Ascending aorta (tissue), 2 donors: ENCODE measurements at regions of chr14 and their contacts with region 1.

Region 1: GRCh38 chr14:23141671-23142451 is 22.8 kb upstream of the CEBPE start:
- DNase-seq: peak; percentile 41 to 91
- H3K4me3 ChIP-seq: no peak overlapping the region
- H3K27ac ChIP-seq: peak overlapping the region; percentile 63 to 64
- H3K4me1 ChIP-seq: peaks cover 4 to 33% of the 10 kb centered on the region in 2 donors
- H3K27me3 ChIP-seq: no peaks in the 10 kb centered on the region
- CTCF ChIP-seq: no peak

Region 2: GRCh38 chr14:23114669-23115491 is 27.0 kb before region 1 on chr14:
- intact Hi-C with region 1: no loop called
- DNase-seq: peak; percentile 33 to 87
- H3K4me3 ChIP-seq: no peak overlapping the region
- H3K27ac ChIP-seq: no peak overlapping the region
- H3K4me1 ChIP-seq: peaks cover 0 to 3% of the 10 kb centered on the region in 2 donors
- H3K27me3 ChIP-seq: no peaks in the 10 kb centered on the region
- CTCF ChIP-seq: no peak

Region 3: DNA sequence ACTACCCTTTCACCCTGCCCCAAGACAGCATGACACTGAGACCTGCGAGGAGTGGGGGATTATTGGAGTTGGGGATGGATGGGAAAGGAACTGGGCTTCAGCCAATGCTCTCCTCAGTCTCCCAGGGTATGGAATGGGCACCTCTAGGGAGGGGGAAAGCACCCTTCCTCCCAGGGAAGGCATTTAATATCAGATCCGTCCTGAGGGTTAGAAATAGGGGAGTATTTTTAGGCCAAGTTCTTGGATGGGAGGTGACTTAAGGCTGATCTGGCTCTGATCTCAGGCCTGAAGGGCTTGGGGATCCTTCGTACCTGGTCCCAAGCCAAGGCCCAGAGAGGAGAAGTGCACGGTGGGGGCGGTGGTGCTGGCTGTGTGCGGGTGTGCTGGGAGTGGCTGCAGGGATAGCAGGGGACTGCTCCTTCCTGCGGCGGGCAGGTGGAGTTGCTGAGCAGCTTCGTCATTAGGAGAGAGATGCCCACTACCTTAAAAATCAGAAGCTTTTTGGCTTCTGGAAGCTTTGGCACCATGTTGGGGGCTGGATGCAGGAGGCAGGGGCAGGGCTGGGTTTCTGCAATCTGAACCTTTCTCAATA is 15.8 kb before region 1 on chr14:
- intact Hi-C with region 1: loop called (anchors 2 kb)
- DNase-seq: no peak
- H3K4me3 ChIP-seq: no peak overlapping the region
- H3K27ac ChIP-seq: peak overlapping the region; percentile 58 to 72
- H3K4me1 ChIP-seq: peaks cover 6 to 29% of the 10 kb centered on the region in 2 donors
- H3K27me3 ChIP-seq: no peaks in the 10 kb centered on the region
- CTCF ChIP-seq: no peak

Region 4: DNA sequence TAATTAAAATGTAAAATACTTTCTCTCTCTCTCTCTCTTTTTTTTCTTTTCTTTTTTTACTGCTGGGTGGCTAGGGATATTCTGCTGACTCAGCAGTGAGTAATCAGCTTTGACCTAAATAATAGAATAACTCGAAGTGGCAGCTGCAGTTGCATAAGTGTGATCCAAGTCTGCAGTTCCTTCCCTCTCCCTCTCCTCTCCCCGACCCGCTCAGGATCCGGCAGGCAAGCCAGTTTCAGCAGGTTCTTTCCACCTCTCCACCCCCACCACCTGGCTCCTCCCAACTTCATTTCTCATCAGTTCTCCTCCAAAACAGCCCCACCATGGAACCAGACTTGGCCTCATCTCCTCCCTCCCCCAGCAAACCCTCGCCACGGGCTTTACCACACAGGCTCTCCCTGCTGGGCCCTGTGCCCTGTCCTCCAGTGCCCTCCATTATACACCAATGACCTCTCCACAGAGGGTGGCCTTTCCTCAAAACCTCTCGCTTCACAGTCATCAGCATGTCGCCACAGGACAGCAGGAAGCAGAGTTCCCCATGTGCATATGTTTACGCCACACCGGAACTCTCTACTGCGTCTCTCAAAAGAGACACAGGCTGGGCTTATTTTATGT is 19.2 kb after region 1 on chr14:
- intact Hi-C with region 1: no loop called
- DNase-seq: peak in 1 of 2 donors; percentile 72
- H3K4me3 ChIP-seq: no peak overlapping the region
- H3K27ac ChIP-seq: peak overlapping the region; percentile 23 to 51
- H3K4me1 ChIP-seq: peaks cover 0 to 5% of the 10 kb centered on the region in 2 donors
- H3K27me3 ChIP-seq: no peaks in the 10 kb centered on the region
- CTCF ChIP-seq: no peak

Region 5: DNA sequence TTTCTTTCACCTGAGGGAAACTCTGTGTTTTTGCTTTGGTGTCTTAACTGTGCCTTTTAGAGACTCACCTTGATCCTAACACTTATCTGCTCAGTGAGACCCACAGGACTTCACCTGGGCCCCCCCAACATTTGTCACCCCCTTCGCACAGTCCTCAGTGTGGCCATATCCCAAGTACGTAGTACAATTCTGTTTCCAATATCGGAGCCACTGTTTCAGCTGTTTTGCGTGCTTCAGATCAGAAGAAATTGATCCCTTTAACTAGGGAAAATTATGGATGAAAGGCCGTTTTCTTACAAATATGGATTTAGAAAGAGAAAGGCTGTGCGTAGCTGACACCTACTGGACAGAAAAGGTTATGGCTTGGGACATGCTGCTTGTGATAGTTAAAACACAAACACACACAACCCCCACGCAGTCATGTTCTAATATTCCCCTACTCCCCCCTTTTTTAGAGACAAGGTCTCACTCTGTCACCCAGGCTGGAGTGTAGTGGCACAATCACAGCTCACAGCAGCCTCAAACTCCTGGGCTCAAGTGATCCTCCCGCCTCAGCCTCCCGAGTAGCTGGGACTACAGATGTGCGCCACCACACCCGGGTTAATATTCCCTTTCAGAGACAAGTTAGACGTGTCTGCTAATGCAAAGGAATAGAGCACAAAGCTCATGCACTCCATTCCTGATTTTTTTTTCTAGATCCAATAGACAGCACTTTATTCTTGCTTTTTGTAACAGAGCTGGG is 45.2 kb after region 1 on chr14:
- intact Hi-C with region 1: loop called (anchors 5 kb)
- DNase-seq: peak in 1 of 2 donors; percentile 77
- H3K4me3 ChIP-seq: no peak overlapping the region
- H3K27ac ChIP-seq: no peak overlapping the region
- H3K4me1 ChIP-seq: no peaks in the 10 kb centered on the region
- H3K27me3 ChIP-seq: no peaks in the 10 kb centered on the region
- CTCF ChIP-seq: peak; percentile 82 to 85 (median 85)